ENCODE measurements at regions of chr1 and their contacts with region 1.

Region 1: DNA sequence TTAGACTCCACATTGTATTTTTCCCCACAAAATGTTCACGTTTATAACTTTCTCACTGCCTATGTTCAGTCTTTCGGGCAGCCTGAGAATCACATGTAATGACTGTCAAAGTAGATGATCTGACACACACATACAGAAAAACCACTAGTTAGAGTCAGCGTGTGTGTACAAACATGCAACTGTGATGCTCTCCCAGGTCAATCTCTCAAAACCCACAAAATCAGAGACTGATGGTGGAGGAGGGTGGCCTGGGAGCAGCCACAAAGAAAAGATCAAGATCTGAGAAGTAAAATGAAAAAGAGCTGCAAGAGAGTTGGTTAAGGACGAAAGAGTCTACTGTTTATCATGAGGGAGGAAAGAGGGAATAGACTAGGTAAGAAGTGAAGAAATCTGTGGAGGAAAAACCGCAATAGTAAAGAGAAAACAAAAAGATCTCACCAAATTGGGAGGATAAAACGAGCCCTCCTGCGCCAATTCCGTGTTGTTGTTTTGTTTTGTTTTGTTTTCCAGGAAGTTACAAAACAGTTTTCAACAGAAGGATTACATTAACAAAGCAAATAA is 2.3 kb downstream of the EGLN1 start:
- DNase-seq: no peak
- CTCF ChIP-seq: no peak

Region 2: DNA sequence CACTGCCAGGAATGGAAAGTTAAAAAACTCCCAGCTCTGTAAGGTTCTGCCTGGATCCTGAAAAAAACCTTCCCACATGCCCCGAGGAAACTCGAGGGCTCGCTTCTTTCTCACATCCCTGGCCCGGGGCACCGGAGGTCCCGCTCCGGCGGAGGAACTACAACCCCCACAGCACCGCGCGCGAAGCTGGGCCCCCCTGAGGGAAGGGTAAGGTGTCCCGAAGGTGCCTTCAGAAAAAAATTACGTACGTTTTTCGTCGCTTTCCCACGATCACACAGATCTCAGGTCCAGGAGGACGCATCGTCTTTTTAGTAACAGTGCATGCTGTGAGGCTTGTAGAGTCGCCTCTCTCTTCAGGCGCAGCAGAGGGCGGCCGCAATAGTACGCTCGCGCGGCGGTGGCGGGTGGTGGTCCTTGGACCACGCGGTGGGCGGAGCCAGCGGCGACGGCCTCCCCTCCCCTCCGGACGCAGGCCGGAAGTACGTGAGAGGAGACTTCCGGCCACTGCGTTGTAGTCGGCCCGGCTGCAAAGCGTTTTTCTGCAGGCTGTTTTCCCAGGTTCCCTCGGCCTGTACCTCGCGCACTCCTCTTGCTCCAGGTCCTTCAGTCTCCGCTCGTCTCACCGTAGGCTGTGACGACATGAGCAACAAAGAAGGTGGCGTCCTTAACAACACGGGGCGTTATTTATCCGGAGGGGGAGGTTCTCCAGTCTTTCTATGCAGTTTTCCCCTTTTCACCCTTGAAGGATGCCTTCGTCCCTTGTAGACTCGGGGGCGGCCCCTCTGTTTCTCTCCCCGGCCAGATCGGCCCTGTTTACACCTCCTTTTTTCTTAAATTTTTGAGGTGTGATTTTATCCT is 108.6 kb after region 1 on chr1 and contains the start of gene TSNAX:
- in situ Hi-C with region 1: loop called (anchors 10 kb)
- DNase-seq: peak; percentile 90
- CTCF ChIP-seq: no peak

Region 3: DNA sequence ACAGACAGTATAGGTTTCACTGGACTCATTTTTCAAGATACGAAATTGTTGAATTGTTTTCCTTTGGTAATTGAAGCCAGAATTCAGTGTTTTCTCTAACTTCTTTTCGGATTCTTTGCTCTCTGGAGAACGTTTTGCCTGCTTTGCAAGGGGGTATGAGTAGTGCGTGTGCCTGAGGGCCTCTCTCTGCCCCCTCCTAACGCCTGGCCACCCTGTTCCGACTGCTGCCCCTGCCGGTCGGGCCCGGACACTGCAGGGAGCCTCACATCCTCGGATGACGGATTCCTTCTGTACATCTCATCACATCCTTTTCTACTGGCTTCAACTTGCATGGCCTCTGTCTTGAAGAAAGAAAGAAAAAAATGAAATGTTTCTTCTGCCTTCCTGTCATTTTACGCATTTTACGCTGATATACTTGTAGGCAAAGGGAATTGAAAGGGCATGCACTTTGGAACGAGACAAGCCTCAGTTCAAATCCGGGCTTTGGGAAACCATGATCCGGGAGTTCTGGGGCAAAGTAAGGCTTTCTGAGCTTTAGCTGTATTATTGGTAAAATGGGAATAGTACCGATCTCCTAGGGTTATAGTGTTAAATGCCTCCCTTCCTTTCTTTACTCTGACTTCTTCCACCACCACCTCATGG is 271.9 kb after region 1 on chr1:
- in situ Hi-C with region 1: no loop called
- DNase-seq: no peak
- CTCF ChIP-seq: peak; percentile 9

Measured in GM13977 (cell line).